ENCODE measurements at regions of chr2 and their contacts with region 1.

Region 1: GRCh38 chr2:85066874-85067351 is 66.3 kb upstream of the TCF7L1 start:
- DNase-seq: peak; percentile 59 to 83 (median 78)
- H3K4me3 ChIP-seq: peak overlapping the region; percentile 15
- H3K27ac ChIP-seq: no peak overlapping the region
- H3K4me1 ChIP-seq: no peaks in the 10 kb centered on the region
- H3K27me3 ChIP-seq: no peaks in the 10 kb centered on the region
- CTCF ChIP-seq: peak; percentile 31 to 68 (median 67)
- EP300 ChIP-seq: no peak
- POLR2A ChIP-seq: no peak

Region 2: GRCh38 chr2:85302121-85302520 is 235.2 kb after region 1 on chr2:
- intact Hi-C with region 1: loop called (anchors 2 to 5 kb)
- DNase-seq: no peak
- H3K4me3 ChIP-seq: no peak overlapping the region
- H3K27ac ChIP-seq: no peak overlapping the region
- H3K4me1 ChIP-seq: no peaks in the 10 kb centered on the region
- H3K27me3 ChIP-seq: no peaks in the 10 kb centered on the region
- CTCF ChIP-seq: no peak
- EP300 ChIP-seq: no peak
- POLR2A ChIP-seq: no peak